ENCODE measurements at regions of chr2 and their contacts with region 1.

Region 1: DNA sequence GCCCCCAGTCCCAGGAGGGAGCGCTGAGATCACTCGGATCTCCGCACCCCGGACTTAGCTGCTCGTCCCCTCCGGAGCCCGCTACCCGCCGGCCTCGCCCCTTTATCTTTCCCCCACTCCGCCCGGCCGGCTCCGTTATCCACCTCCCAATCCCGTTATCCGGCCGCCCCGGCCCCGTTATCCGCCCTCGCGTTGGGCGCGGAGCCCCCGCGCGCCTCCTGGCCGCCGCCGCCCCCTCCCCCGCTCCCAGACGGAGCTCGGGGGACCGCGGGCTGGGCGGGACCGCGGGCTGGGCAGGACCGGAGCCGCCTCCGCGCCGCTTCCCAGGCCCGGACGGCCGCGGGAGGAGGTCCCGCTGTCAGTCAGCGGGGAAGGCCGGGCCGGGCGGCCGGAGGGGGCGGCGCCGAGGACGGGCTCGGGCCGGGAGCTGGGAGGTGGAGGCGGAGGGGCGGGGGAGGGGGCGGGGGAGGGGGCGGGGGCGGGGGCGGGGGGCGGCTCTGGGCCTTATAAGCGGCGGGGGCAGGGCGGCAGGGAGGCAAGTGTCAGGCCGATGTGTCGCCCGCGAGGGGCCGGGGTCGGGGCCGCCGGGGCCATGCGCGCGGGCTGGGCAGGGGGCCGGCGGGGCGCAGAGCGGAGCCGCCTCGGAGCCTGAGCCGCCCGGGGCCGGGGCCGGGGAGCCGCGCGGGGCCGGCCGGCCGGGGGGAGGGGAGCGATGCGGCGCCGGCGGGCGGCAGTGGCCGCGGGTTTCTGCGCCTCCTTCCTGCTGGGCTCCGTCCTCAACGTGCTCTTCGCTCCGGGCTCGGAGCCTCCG is at the start of gene PKDCC:
- DNase-seq: peak; percentile 56
- H3K4me3 ChIP-seq: peak within 1 kb of the TSS; percentile 51 to 53
- H3K27ac ChIP-seq: peak within 1 kb of the TSS; percentile 64 to 73
- H3K4me1 ChIP-seq: no peaks in the 10 kb centered on the region
- H3K27me3 ChIP-seq: no peaks in the 10 kb centered on the region
- CTCF ChIP-seq: no peak
- POLR2A ChIP-seq: no peak
- total RNA-seq, gene PKDCC: 11.1 to 61.4 TPM

Region 2: GRCh38 chr2:41933585-41934320 is 113.9 kb before region 1 on chr2:
- intact Hi-C with region 1: loop called (anchors 10 kb)
- DNase-seq: no peak
- H3K4me3 ChIP-seq: no peak overlapping the region
- H3K27ac ChIP-seq: no peak overlapping the region
- H3K4me1 ChIP-seq: no peaks in the 10 kb centered on the region
- H3K27me3 ChIP-seq: no peaks in the 10 kb centered on the region
- CTCF ChIP-seq: no peak
- POLR2A ChIP-seq: no peak

Measured in prostate gland (tissue), 2 donors.